Activated T-helper 2 cell treated with anti-CD3 and anti-CD28 coated beads, Interferon-gamma antibody, Interleukin-2, Interleukin-4, amounts not matched to agents 10 μg/mL and 5 μg/mL and 100 μg/mL, durations not matched to agents 14 hours and 24 hours and 36 hours (primary cell): ENCODE measurements at regions of chr1 and their contacts with region 1.

Region 1: DNA sequence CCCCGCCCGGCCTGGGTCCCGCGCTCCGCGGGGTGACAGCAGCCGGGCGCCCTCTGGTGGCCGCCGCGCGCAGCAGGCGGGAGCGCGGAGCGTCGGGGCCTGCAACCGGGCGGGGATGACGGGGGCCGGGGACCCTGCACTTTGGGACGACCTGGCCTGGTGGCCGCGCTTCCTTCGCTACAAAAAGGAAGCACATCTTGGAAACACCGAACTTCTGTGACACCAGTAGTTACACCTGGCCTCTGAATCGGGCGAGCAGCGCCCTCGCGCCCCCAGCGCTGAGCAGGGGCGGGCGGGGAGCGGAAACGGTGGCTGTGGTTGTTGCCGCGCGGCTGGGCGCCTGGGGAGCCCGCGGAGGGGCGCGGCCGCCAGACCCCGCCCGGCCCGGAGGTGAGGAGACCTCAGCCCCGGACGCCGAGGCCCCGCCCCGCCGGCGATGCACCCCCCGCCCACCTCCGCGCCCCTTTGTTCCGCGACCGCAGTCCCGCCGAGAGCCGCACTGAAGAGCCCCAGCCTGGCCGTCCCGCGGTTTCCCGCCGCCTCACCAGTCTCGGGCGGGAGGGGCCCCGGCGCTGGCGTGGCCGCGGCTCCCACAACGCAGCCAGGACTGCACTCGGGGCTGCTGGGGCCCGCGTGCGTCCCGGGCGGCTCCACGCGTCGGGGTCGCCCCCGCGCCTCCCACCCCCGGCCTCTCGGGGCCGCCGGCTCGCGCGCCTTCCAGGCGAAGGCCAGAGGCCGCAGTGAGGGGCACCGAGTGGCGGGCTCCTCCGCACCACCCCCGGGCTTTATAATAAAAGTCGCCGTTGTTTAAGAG is 59.3 kb downstream of the H3-3A start:
- DNase-seq: peak; percentile 77
- H3K4me3 Mint-ChIP-seq: peak overlapping the region; percentile 81
- H3K27ac Mint-ChIP-seq: no peak overlapping the region
- H3K4me1 Mint-ChIP-seq: peaks cover 27% of the 10 kb centered on the region
- H3K27me3 Mint-ChIP-seq: peaks cover 13% of the 10 kb centered on the region

Region 2: GRCh38 chr1:225896937-225897549 is 224.8 kb before region 1 on chr1:
- intact Hi-C with region 1: no loop called
- DNase-seq: peak; percentile 75
- H3K4me3 Mint-ChIP-seq: peak overlapping the region; percentile 52
- H3K27ac Mint-ChIP-seq: peak overlapping the region; percentile 56
- H3K4me1 Mint-ChIP-seq: peaks cover 31% of the 10 kb centered on the region
- H3K27me3 Mint-ChIP-seq: peaks cover 13% of the 10 kb centered on the region

Region 3: GRCh38 chr1:226083302-226084101 is 38.3 kb before region 1 on chr1:
- intact Hi-C with region 1: loop called (anchors 1 kb)
- DNase-seq: peak; percentile 90
- H3K4me3 Mint-ChIP-seq: peak overlapping the region; percentile 84
- H3K27ac Mint-ChIP-seq: peak overlapping the region; percentile 70
- H3K4me1 Mint-ChIP-seq: peaks cover 6% of the 10 kb centered on the region
- H3K27me3 Mint-ChIP-seq: peaks cover 3% of the 10 kb centered on the region

Region 4: DNA sequence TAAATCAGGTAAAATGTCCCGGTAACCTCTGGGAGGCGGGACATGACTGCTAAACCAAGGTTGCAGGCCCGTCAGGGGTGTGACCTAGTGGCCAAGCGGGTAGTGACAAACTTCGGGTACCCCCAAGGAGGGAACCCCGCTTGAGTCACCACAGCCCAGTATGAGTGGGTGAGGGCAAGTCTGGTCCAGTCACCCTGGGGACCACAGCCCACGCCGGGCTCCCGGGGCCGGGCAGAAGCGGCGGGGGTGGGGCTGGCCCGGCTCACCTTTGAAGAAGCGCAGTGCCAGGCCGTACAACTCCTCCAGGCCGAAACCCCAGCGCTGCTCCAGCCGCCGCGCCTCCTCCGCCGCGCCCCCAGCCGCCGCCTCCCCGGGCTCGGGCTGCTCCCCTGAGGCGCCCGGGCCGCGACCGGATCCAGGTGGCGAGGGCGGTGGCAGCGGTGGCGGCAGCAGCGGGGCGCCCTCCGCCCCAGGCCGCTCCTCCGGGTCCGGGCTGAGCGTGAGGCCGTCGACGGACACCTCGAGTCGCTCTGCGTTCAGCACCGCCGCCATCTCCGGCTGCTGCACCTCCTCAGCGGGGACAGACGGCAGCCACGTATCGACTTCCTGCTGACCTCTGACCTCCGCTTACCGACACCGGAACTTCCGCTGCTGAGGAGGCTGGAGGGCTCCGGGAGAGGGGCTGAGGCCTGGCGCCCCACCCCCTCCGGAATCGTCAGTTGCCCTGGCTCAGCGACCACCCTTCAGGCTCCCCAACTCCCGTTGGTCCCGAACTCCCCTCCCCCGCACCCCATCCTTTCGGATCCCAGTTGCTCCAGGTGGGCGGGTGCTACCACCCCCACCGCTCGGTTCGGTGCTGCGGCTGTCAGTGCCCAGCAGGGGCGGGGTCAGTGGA is 64.6 kb after region 1 on chr1 and contains the start of gene ACBD3:
- intact Hi-C with region 1: loop called (anchors 2 kb)
- DNase-seq: peak; percentile 82
- H3K4me3 Mint-ChIP-seq: peak within 1 kb of the TSS; percentile 96
- H3K27ac Mint-ChIP-seq: peak within 1 kb of the TSS; percentile 92
- H3K4me1 Mint-ChIP-seq: peaks cover 22% of the 10 kb centered on the region
- H3K27me3 Mint-ChIP-seq: no peaks in the 10 kb centered on the region
- total RNA-seq, gene ACBD3: 24.3 and 25.4 TPM in 2 replicates

Region 5: DNA sequence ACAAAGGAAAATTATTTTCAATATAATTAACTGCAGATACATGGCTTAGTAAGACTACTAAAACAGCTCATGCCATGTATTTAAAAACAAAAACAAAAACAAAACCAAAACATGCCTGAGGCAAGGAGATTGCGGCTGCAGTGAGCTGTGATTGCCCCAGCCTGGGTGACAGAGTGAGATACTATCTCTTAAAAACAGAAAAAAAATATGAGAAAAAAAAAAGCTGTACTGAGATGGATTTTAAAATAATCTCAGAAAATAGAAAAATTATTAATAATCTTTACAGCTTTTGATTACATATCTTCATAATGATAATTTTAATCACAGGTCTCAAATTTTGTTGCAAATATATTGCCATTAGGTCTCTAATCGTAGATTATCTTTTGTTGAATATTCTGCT is 211.2 kb after region 1 on chr1:
- intact Hi-C with region 1: loop called (anchors 2 kb)
- DNase-seq: no peak
- H3K4me3 Mint-ChIP-seq: peak overlapping the region; percentile 11
- H3K27ac Mint-ChIP-seq: no peak overlapping the region
- H3K4me1 Mint-ChIP-seq: peaks cover 7% of the 10 kb centered on the region
- H3K27me3 Mint-ChIP-seq: no peaks in the 10 kb centered on the region